Activated CD4-positive, alpha-beta T cell treated with anti-CD3 and anti-CD28 coated beads, Interleukin-2, amount 10 ng/mL, durations not matched to agents 24 days and 14 days (primary cell): ENCODE measurements at regions of chr1 and their contacts with region 1.

Region 1: GRCh38 chr1:206050655-206051235 is 2.2 kb upstream of the RHEX start:
- DNase-seq: peak; percentile 86
- H3K4me3 Mint-ChIP-seq: peak overlapping the region; percentile 35
- H3K27ac Mint-ChIP-seq: peak overlapping the region; percentile 64
- H3K4me1 Mint-ChIP-seq: peaks cover 31% of the 10 kb centered on the region
- H3K27me3 Mint-ChIP-seq: peaks cover 27% of the 10 kb centered on the region

Region 2: GRCh38 chr1:206001476-206001888 is 49.3 kb before region 1 on chr1:
- intact Hi-C with region 1: loop called (anchors 1 kb)
- DNase-seq: no peak
- H3K4me3 Mint-ChIP-seq: no peak overlapping the region
- H3K27ac Mint-ChIP-seq: no peak overlapping the region
- H3K4me1 Mint-ChIP-seq: peaks cover 25% of the 10 kb centered on the region
- H3K27me3 Mint-ChIP-seq: peaks cover 13% of the 10 kb centered on the region

Region 3: DNA sequence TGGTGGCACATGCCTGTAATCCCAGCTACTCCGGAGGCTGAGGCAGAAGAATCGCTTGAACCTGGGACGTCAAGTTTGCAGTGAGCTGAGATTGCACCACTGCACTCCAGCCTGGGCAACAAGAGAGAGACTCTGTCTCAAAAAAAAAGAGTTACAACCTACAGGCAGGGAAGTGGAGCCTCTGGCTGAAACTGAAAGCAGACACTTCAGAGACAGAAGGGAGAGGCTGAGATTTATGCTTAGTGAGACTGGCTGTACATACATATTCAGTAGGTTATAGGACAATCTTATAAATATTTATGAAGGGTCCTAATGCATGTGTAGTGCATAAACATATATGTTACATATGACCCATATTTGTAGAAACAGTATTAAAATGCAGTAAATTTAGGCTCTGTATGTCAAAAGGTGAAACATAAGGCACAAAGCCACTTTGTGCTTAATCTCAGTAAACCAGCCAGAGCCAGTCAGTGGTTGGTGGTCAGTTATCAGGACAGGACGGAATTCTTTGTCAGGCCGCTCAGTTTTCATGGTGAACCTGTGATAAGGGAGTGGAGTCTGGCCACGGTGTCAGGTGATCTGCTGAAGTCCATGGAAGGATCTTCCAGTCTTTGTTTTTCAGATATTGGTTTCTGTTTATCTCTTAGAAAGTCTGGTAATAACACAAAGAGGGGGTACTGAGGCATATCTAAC is 15.9 kb after region 1 on chr1:
- intact Hi-C with region 1: loop called (anchors 2 kb)
- DNase-seq: peak; percentile 74
- H3K4me3 Mint-ChIP-seq: no peak overlapping the region
- H3K27ac Mint-ChIP-seq: no peak overlapping the region
- H3K4me1 Mint-ChIP-seq: peaks cover 6% of the 10 kb centered on the region
- H3K27me3 Mint-ChIP-seq: peaks cover 56% of the 10 kb centered on the region